ENCODE measurements at regions of chr9 and their contacts with region 1.

Region 1: DNA sequence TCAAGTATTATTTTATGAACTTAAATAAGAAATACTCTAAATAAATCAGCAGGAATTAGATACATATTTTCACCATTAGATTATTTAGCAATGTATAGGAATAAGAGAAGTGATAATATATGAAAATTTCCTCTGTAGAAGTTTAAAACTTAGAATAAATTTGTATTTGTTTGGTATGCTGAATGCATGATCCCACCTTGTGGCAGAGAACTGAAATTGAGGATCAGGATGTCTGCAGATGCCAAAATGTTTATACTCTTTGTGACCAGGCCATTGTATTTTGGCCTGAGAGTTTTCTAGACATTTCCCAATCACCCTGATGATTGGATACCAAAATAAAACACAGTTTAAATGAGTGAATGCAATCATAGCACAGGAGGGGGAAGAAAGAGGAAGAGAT is 6.3 kb downstream of the TYRP1 start:
- DNase-seq: no peak
- ATAC-seq: no peak
- H3K4me3 Mint-ChIP-seq: no peak overlapping the region
- H3K27ac Mint-ChIP-seq: no peak overlapping the region
- H3K4me1 Mint-ChIP-seq: no peaks in the 10 kb centered on the region
- H3K27me3 Mint-ChIP-seq: no peaks in the 10 kb centered on the region

Region 2: GRCh38 chr9:12759761-12760160 is 60.2 kb after region 1 on chr9:
- CTCF ChIA-PET with region 1: no interaction called
- POLR2A ChIA-PET with region 1: no interaction called
- intact Hi-C with region 1: loop called in 1 of 2 experiments (anchors 10 kb)
- DNase-seq: no peak
- ATAC-seq: no peak
- H3K4me3 Mint-ChIP-seq: no peak overlapping the region
- H3K27ac Mint-ChIP-seq: no peak overlapping the region
- H3K4me1 Mint-ChIP-seq: no peaks in the 10 kb centered on the region
- H3K27me3 Mint-ChIP-seq: no peaks in the 10 kb centered on the region

Region 3: DNA sequence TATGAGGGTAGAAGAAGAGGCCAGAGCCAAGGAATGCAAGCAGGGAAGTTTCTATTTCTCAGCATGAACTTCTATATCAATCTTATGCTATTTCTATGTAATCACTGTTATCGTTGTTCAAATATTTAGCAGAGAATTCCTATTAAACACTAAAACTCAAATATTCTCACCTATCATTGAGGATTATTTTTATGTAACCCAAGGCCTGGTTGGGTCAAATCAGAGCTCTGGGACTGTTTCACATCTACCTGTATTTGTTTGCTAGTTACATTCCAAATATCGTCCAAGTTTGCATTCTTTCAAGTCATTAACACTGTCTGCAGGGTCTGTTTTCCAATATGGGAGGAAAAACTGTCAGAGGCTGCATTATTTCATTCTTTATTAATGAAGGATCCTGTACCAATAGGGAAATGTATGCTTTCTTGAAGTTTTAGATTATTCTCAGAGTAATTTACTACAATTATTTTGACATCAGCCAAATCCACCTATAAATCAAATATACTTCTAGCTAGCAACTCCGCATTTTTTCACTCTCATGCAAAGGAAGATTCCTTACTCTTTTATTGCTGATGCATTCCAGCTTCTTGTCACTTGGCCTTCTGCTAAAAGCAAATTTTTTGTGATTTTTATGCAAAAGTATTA is 127.5 kb after region 1 on chr9:
- CTCF ChIA-PET with region 1: no interaction called
- POLR2A ChIA-PET with region 1: no interaction called
- intact Hi-C with region 1: no loop called
- DNase-seq: no peak
- ATAC-seq: no peak
- H3K4me3 Mint-ChIP-seq: no peak overlapping the region
- H3K27ac Mint-ChIP-seq: no peak overlapping the region
- H3K4me1 Mint-ChIP-seq: no peaks in the 10 kb centered on the region
- H3K27me3 Mint-ChIP-seq: no peaks in the 10 kb centered on the region

Measured in activated CD4-positive, alpha-beta T cell treated with anti-CD3 and anti-CD28 coated beads for 36 hours (primary cell).